AG04450 (cell line): ENCODE measurements at regions of chr5 and their contacts with region 1.

Region 1: DNA sequence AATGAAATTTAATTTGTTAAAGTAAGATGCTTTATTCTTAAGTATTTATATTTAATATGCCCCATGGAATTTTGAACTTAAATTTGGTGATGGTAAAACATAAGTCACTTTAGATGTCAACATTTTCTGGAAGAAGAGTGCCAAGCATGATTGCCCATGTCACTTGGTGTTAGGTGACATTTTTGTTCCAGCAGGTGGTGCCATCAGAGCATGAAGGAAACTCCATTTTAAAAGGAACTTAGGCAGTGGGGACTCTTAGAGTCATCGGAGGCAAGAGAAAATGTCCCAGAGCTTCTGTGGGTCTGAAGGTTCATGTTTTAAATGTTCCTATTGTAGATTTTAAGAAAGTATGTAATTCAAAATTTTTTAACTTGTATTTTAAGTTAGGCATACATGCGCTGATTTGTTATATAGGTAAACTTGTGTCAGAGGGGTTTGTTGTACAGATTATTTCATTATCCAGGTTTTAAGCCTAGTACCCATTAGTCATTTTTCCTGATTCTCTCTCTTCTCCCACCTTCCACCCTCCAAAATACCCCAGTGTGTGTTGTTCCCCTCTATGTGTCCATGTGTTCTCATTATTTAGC is 789.3 kb downstream of the SEMA5A start:
- DNase-seq: no peak
- H3K4me3 ChIP-seq: no peak overlapping the region
- H3K27ac ChIP-seq: no peak overlapping the region
- H3K27me3 ChIP-seq: no peaks in the 10 kb centered on the region
- CTCF ChIP-seq: peak; percentile 63

Region 2: DNA sequence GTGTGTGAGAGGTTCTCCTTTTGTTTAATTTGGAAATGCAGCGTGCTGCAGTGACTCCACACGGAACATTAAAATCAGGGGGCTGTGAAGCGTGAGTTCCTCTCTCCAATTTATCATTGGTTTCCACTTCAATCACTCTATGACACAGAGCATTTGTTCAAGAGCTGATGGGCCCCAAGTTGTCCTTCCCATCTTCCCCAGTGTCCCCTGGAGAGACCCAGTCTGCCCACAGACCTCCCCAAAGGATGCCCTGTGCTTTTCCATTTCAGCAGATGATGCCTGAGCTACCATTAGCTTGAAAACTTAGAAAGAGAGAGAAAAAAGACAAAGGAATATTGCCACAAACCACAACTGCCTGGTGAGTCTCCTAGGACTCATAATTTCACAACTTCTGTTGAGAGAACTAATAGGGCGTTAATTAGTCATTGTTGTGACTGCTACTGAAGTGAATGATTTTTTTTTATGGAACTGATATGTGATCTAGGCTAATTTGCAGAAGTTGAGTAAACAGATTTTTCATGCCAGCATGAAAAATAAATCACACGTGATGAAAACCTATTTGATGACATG is 16.5 kb after region 1 on chr5:
- CTCF ChIA-PET with region 1: no interaction called
- POLR2A ChIA-PET with region 1: no interaction called
- DNase-seq: no peak
- H3K4me3 ChIP-seq: no peak overlapping the region
- H3K27ac ChIP-seq: no peak overlapping the region
- H3K27me3 ChIP-seq: no peaks in the 10 kb centered on the region
- CTCF ChIP-seq: no peak

Region 3: DNA sequence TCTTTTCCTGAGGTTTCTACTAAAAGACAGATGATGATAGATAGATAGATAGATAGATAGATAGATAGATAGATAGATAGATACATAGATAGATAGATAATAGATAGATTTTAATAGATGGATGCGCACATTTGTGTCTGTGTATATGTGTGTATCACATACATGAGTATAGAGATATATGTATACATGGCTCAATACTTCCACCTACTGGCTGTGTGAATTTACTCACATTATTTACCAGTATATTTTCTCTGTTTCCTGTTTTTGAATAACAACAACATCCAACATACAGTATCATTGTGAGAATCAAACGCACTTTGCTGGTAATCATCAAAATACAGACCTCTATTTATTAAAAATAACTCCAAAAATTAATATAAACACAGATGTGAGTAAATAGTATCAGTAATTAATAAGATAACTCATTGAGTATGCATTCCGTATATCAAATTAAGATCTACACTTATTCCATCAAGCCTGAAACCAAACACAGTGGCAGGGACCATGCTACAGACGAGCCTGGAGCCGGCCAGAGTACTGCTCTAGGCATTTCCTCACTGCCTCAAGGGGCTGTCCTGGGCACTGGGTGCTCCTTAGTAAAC is 451.3 kb after region 1 on chr5:
- CTCF ChIA-PET with region 1: interaction called, 12 read pairs
- POLR2A ChIA-PET with region 1: no interaction called
- DNase-seq: no peak
- H3K4me3 ChIP-seq: no peak overlapping the region
- H3K27ac ChIP-seq: no peak overlapping the region
- H3K27me3 ChIP-seq: no peaks in the 10 kb centered on the region
- CTCF ChIP-seq: peak; percentile 58